IMR-90 (cell line): ENCODE measurements at regions of chr6 and their contacts with region 1.

Region 1: DNA sequence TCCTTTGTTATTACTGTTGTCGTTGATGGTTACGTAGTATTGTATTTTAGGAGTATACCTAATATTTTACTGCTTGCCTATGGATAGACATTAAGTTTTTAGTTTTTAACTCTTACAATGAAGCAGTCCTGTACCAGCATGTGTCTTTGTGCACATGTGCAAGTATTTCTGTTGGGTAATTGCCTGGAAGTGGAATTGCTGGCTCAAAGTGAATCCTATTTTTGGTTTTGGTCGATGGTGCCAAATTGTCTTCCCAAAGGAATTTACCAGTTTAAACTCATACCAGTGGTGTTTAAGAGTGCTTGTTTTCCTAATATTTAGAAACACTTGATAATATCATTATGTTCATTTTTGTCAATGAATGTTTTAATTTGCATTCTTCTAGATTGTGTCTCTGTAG is 75.5 kb downstream of the ANKS1A start:
- DNase-seq: no peak
- ATAC-seq: peak; percentile 27; the same call in 1 of the 2 replicates
- H3K4me3 ChIP-seq: no peak overlapping the region
- H3K27ac ChIP-seq: no peak overlapping the region
- H3K4me1 ChIP-seq: peaks cover 2% of the 10 kb centered on the region
- H3K27me3 ChIP-seq: no peaks in the 10 kb centered on the region
- CTCF ChIP-seq: no peak
- POLR2A ChIP-seq: no peak
- RAD21 ChIP-seq: no peak

Region 2: GRCh38 chr6:34951731-34952130 is 12.8 kb before region 1 on chr6:
- CTCF ChIA-PET with region 1: no interaction called
- POLR2A ChIA-PET with region 1: interaction called, 10 read pairs
- dilution Hi-C with region 1: no loop called
- in situ Hi-C with region 1: no loop called
- intact Hi-C with region 1: no loop called
- DNase-seq: no peak
- ATAC-seq: no peak
- H3K4me3 ChIP-seq: no peak overlapping the region
- H3K27ac ChIP-seq: no peak overlapping the region
- H3K4me1 ChIP-seq: peaks cover 13% of the 10 kb centered on the region
- H3K27me3 ChIP-seq: no peaks in the 10 kb centered on the region
- CTCF ChIP-seq: no peak
- POLR2A ChIP-seq: no peak
- RAD21 ChIP-seq: no peak

Region 3: GRCh38 chr6:34992371-34992770 is 27.8 kb after region 1 on chr6:
- CTCF ChIA-PET with region 1: interaction called, 10 read pairs
- POLR2A ChIA-PET with region 1: no interaction called
- dilution Hi-C with region 1: no loop called
- in situ Hi-C with region 1: no loop called
- intact Hi-C with region 1: no loop called
- DNase-seq: no peak
- ATAC-seq: no peak
- H3K4me3 ChIP-seq: no peak overlapping the region
- H3K27ac ChIP-seq: no peak overlapping the region
- H3K4me1 ChIP-seq: no peaks in the 10 kb centered on the region
- H3K27me3 ChIP-seq: no peaks in the 10 kb centered on the region
- CTCF ChIP-seq: no peak
- POLR2A ChIP-seq: no peak
- RAD21 ChIP-seq: no peak